Heart left ventricle (tissue), 16 donors: ENCODE measurements at regions of chr12 and their contacts with region 1.

Region 1: GRCh38 chr12:1391722-1392121 is 202.7 kb downstream of the FBXL14 start:
- DNase-seq: no peak
- ATAC-seq: no peak
- H3K4me3 ChIP-seq: no peak overlapping the region
- H3K27ac ChIP-seq: no peak overlapping the region
- H3K4me1 ChIP-seq: no peaks in the 10 kb centered on the region
- H3K27me3 ChIP-seq: no peaks in the 10 kb centered on the region
- CTCF ChIP-seq: no peak
- POLR2A ChIP-seq: no peak

Region 2: GRCh38 chr12:1405619-1406018 is 13.9 kb after region 1 on chr12:
- intact Hi-C with region 1: loop called in 1 of 10 experiments (anchors 2 kb)
- DNase-seq: no peak
- ATAC-seq: no peak
- H3K4me3 ChIP-seq: no peak overlapping the region
- H3K27ac ChIP-seq: no peak overlapping the region
- H3K4me1 ChIP-seq: peaks cover 0 to 4% (median 0%) of the 10 kb centered on the region in 12 donors
- H3K27me3 ChIP-seq: no peaks in the 10 kb centered on the region
- CTCF ChIP-seq: no peak
- POLR2A ChIP-seq: no peak